GM12878 (cell line): ENCODE measurements at regions of chr5 and their contacts with region 1.

Region 1: GRCh38 chr5:923281-923873 is 30.7 kb downstream of the TRIP13 start:
- DNase-seq: no peak
- ATAC-seq: peak; percentile 100
- H3K4me3 ChIP-seq: no peak overlapping the region
- H3K27ac ChIP-seq: no peak overlapping the region
- H3K4me1 ChIP-seq: no peaks in the 10 kb centered on the region
- H3K27me3 ChIP-seq: no peaks in the 10 kb centered on the region
- CTCF ChIP-seq: peak; percentile 81 to 97 (median 92); a peak in 5 of 6 replicates
- EP300 ChIP-seq: no peak
- POLR2A ChIP-seq: no peak
- RAD21 ChIP-seq: peak; percentile 93

Region 2: GRCh38 chr5:989961-990530 is 66.7 kb after region 1 on chr5:
- CTCF ChIA-PET with region 1: interaction called, 5 read pairs
- POLR2A ChIA-PET with region 1: no interaction called
- RAD21 ChIA-PET with region 1: no interaction called
- SMC1A ChIA-PET with region 1: no interaction called
- in situ Hi-C with region 1: no loop called
- intact Hi-C with region 1: loop called (anchors 5 kb)
- DNase-seq: no peak
- ATAC-seq: peak; percentile 42
- H3K4me3 ChIP-seq: no peak overlapping the region
- H3K27ac ChIP-seq: no peak overlapping the region
- H3K4me1 ChIP-seq: no peaks in the 10 kb centered on the region
- H3K27me3 ChIP-seq: peaks cover 4% of the 10 kb centered on the region in 2 experiments; a peak in 3 of 4 replicates
- CTCF ChIP-seq: peak in 2 of 3 experiments; percentile 33 to 50; a peak in 3 of 6 replicates
- EP300 ChIP-seq: no peak
- POLR2A ChIP-seq: no peak
- RAD21 ChIP-seq: 0 out of 2 replicates have a peak, but pooled peaks have one; percentile 10

Region 3: GRCh38 chr5:1052641-1053390 is 129.4 kb after region 1 on chr5:
- CTCF ChIA-PET with region 1: no interaction called
- POLR2A ChIA-PET with region 1: no interaction called
- RAD21 ChIA-PET with region 1: no interaction called
- SMC1A ChIA-PET with region 1: no interaction called
- in situ Hi-C with region 1: no loop called
- intact Hi-C with region 1: no loop called
- DNase-seq: no peak
- ATAC-seq: no peak
- H3K4me3 ChIP-seq: no peak overlapping the region
- H3K27ac ChIP-seq: no peak overlapping the region
- H3K4me1 ChIP-seq: no peaks in the 10 kb centered on the region
- H3K27me3 ChIP-seq: no peaks in the 10 kb centered on the region
- CTCF ChIP-seq: 0 out of 6 replicates have a peak, but pooled peaks of 1 of the 3 experiments have one; percentile 1
- EP300 ChIP-seq: no peak
- POLR2A ChIP-seq: no peak
- RAD21 ChIP-seq: no peak

Region 4: DNA sequence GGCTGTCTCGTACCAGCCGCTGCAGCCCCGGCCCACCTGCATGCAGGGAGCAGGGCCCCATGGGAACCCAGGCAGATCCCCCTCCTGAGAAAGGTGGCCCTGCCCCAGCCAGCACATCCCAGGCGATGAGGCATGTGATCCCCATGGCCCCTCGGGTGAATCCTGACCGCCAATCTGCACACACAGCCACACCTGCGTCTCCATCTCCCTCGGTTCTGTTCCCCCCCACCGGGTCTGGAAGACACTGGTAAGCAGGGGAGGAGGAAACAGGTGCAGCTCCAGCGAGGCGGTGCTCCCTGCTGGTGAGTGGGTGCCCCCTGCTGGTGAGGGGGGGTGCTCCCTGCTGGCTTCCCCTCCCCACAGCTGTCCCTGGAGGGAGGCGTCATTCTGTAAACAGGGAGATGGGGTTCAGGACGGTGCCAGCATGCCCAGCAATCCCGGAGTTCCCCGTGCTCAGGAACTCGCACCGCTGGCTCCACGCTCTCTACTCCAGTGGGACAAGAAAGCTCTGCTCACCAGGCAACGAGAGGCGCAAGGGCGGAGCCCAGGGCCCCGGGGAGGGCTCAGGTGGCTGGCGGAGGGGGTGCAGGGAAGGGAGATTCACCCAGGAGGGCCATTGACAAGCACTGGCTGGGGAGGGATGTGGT is 216.9 kb after region 1 on chr5:
- CTCF ChIA-PET with region 1: interaction called, 61 read pairs
- POLR2A ChIA-PET with region 1: no interaction called
- RAD21 ChIA-PET with region 1: interaction called, 16 read pairs
- SMC1A ChIA-PET with region 1: interaction called, 36 read pairs
- in situ Hi-C with region 1: no loop called
- intact Hi-C with region 1: loop called (anchors 1 kb)
- DNase-seq: no peak
- ATAC-seq: peak; percentile 93
- H3K4me3 ChIP-seq: no peak overlapping the region
- H3K27ac ChIP-seq: no peak overlapping the region
- H3K4me1 ChIP-seq: peaks cover 11% of the 10 kb centered on the region
- H3K27me3 ChIP-seq: no peaks in the 10 kb centered on the region
- CTCF ChIP-seq: peak; percentile 79 to 92 (median 90)
- EP300 ChIP-seq: no peak
- POLR2A ChIP-seq: no peak
- RAD21 ChIP-seq: peak; percentile 78

Region 5: GRCh38 chr5:1167728-1168709 is 244.6 kb after region 1 on chr5:
- CTCF ChIA-PET with region 1: interaction called, 20 read pairs
- POLR2A ChIA-PET with region 1: no interaction called
- RAD21 ChIA-PET with region 1: interaction called, 12 read pairs
- SMC1A ChIA-PET with region 1: interaction called, 11 read pairs
- in situ Hi-C with region 1: no loop called
- intact Hi-C with region 1: loop called (anchors 1 kb)
- DNase-seq: no peak
- ATAC-seq: peak; percentile 93
- H3K4me3 ChIP-seq: no peak overlapping the region
- H3K27ac ChIP-seq: no peak overlapping the region
- H3K4me1 ChIP-seq: peaks cover 3% of the 10 kb centered on the region
- H3K27me3 ChIP-seq: no peaks in the 10 kb centered on the region; a peak in 1 of 4 replicates
- CTCF ChIP-seq: peak; percentile 71 to 89 (median 81)
- EP300 ChIP-seq: no peak
- POLR2A ChIP-seq: no peak
- RAD21 ChIP-seq: peak; percentile 82